ENCODE measurements at regions of chr2 and their contacts with region 1.

Region 1: DNA sequence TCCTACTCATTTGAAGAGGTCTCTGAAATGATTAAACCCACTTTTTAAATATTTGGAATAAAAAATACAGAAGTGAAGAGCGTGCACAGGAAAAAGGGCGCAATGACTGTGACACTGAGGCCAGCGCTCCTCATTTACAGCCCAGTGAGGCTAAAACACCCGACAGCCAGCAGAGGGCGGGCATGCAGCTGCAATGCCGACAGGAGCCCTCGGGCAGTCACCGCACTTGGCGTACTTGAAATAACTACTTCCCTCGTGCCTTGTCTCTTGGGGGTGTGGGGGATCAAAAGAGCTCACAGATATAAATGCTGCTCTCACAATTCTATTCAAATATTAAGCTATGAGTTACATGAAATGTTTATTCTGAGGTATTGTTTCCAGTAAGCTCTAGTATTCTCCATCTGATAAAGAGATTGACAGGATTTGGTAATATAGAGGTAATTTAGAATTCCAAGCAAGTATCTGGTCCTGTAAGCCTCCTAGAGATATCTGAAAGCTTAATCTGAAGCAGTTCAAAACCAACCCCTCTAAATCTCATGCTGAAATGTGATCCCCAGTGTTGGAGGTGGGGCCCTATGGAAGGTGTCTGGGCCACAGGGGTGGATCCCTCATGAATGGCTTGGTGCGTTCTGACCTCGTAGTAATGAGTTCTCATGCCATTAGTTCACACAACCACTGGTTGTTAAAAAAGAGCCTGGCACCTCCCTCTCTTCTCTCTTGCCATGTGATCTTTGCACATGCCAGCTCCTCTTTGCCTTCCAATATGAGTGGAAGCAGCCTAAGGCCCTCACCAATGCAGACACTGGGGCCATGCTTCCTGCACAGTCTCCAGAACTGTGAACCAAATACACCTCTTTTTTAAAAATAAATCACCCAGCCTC is 93.6 kb downstream of the ZAP70 start:
- DNase-seq: peak; percentile 70 to 73
- H3K4me3 ChIP-seq: no peak overlapping the region
- H3K27ac ChIP-seq: no peak overlapping the region
- H3K4me1 ChIP-seq: no peaks in the 10 kb centered on the region
- H3K27me3 ChIP-seq: no peaks in the 10 kb centered on the region
- CTCF ChIP-seq: peak; percentile 81 to 92 (median 84)
- POLR2A ChIP-seq: no peak

Region 2: DNA sequence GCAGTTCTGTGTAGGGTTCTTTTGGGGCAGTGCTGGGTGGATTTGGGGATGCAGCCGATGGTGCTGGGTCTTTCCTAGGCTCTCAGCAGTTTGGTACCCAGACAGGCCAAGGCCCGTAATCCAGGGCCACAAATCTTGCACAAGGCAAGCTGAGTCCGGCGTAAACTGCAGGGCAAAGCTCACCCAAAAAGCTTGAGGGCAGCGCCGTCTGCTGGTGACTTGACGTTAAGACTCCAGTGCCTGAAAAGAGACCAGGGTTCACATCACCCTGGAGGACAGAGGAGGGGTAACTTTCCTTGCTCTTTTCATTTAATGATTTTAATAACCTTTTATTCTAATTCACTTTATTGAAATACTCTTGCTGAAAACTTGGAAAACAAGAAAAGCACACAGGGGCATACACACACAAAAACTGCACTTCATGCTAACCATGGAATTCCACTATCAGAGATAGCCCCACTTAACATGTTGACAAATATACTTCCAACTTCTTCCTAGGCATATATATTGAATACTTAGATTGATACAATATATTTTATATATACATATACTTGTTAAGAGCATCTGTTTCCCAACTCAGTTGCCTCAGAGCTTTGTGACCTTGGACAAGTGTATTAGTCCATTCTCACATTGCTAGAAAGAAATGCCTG is 578.2 kb after region 1 on chr2:
- intact Hi-C with region 1: loop called (anchors 10 kb)
- DNase-seq: peak; percentile 26 to 51
- H3K4me3 ChIP-seq: no peak overlapping the region
- H3K27ac ChIP-seq: no peak overlapping the region
- H3K4me1 ChIP-seq: no peaks in the 10 kb centered on the region
- H3K27me3 ChIP-seq: no peaks in the 10 kb centered on the region
- CTCF ChIP-seq: peak; percentile 65 to 82 (median 76)
- POLR2A ChIP-seq: no peak